ENCODE measurements at regions of chr14 and their contacts with region 1.

Region 1: GRCh38 chr14:32710731-32711680 is 227.7 kb upstream of the NPAS3 start:
- DNase-seq: peak in 3 of 10 donors; percentile 28 to 62 (median 46)

Region 2: GRCh38 chr14:32469388-32470160 is 241.4 kb before region 1 on chr14:
- intact Hi-C with region 1: no loop called
- DNase-seq: no peak

Region 3: GRCh38 chr14:32808644-32809043 is 97.6 kb after region 1 on chr14:
- intact Hi-C with region 1: no loop called
- DNase-seq: peak in 2 of 10 donors; percentile 48 to 53

Region 4: DNA sequence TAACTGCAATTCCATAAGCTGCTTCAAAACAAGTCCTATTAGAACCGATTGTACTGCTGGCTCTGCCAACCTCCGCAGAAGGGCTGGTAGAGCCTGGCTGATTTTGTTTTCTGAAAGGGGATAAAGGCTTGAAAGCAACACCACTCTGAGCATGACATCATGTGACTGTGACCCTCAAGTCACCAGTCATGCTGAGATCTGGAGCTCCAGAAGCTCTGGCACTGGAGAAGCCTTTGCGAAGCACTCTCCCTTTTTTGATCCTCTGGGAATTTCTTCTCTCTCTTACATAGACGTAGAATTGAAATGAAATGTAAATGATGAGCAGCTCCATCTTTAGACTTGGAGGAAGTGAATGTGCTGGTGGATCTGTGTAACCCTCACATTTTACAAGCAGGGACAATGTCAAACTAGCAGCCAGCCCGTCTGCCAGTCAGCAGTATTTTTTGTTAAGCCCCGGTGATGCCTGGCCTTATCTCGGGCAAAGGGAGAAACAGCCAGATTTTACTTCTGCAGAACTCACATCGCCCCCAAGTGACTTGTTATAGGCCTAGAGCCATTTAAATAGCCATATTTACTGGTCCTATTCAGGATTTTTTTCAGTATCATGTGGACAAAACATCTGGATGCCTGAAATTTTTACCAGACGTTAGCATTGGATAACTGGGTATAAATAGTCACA is 115.5 kb after region 1 on chr14:
- intact Hi-C with region 1: loop called (anchors 2 kb)
- DNase-seq: peak; percentile 14 to 80 (median 46)